Activated CD4-positive, alpha-beta T cell treated with anti-CD3 and anti-CD28 coated beads, Interleukin-2, amount 10 ng/mL, durations not matched to agents 24 days and 14 days (primary cell): ENCODE measurements at regions of chr7 and their contacts with region 1.

Region 1: GRCh38 chr7:41705109-41705901 is 2.4 kb upstream of the INHBA start:
- DNase-seq: peak; percentile 88
- H3K4me3 Mint-ChIP-seq: peak overlapping the region; percentile 84
- H3K27ac Mint-ChIP-seq: no peak overlapping the region
- H3K4me1 Mint-ChIP-seq: peaks cover 15% of the 10 kb centered on the region
- H3K27me3 Mint-ChIP-seq: peaks cover 58% of the 10 kb centered on the region

Region 2: DNA sequence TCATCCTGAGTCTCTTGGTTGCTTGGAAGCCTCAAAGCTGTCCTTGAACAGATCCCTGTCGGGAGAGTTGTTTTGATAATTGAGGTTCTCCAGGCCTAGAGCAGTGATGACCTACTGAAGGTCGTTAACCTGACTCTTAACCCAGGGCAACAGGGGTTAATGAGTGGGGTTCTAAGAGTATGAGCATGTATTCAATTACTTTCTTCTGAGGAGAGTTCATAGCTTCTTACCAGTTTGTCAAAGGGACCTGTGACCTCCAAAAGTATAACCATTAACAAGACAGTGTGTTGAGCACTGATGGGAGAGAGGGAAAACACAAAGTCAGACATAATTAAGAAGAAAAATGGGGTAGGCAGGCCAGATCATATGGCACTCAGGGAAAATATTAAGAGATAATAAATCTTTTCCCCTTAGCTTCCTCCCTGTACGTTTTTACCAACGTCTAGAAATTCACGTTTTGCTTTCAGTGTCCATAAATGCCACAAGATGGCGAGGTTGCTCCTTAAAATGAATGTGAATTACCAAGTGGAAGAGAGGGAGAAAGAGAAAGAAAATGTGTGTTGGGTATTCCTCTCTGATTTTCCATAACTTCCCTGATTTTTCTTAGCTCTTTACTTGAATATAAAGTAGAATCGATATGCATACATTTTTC is 1472.9 kb before region 1 on chr7:
- intact Hi-C with region 1: loop called (anchors 10 kb)
- DNase-seq: peak; percentile 61
- H3K4me3 Mint-ChIP-seq: no peak overlapping the region
- H3K27ac Mint-ChIP-seq: no peak overlapping the region
- H3K4me1 Mint-ChIP-seq: no peaks in the 10 kb centered on the region
- H3K27me3 Mint-ChIP-seq: no peaks in the 10 kb centered on the region

Region 3: GRCh38 chr7:41003031-41003925 is 702.0 kb before region 1 on chr7:
- intact Hi-C with region 1: no loop called
- DNase-seq: peak; percentile 77
- H3K4me3 Mint-ChIP-seq: no peak overlapping the region
- H3K27ac Mint-ChIP-seq: no peak overlapping the region
- H3K4me1 Mint-ChIP-seq: no peaks in the 10 kb centered on the region
- H3K27me3 Mint-ChIP-seq: no peaks in the 10 kb centered on the region